ENCODE measurements at regions of chr5 and their contacts with region 1.

Region 1: DNA sequence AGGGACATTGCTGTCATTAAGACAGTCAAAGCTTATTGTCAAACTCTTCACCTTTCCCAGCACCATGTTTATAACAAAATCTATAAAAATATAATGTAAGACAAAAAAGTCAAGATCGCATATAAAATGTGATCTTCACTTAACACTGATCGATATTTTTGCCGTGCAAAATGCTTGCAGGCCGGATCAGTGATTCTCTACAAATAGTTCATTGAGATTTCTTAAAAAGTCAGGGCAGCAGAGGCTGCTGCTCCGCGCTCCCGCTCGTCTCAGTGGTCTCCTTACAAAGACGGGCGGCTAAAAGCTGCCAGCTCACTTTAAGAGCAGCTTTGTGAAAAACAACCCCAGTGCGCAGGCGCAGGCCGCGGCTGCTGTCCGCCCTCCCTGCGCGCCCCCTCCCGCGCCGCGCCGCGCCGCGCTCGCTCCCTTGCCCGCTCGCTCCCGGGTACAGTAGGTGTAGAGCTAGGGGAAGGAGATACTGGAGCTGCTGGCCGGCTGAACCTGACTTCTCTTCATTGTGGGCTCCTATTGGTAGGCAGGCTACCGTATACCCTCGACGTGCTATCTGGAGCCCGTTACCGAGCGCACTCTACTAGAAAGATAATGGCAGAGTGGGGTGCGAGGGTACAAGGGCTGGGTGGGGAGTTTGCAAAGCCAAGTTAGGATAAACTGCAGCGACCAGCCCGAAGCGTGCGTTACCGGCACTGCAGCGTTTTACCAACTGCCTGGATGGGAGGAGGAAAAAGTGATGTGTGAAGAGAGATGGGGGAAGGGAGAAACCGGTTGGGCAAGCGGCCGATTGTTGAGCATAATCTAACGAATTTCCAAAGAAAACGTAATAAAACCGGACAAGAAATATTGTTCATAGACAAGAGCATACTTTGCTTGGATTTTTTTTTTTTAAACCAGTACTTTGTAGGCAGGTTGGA is at the start of gene ARRDC3:
- DNase-seq: peak; percentile 96 to 98
- H3K4me3 ChIP-seq: peak within 1 kb of the TSS; percentile 58 to 62
- H3K27ac ChIP-seq: peak within 1 kb of the TSS; percentile 92 to 93
- H3K4me1 ChIP-seq: peaks cover 0 to 17% (median 9%) of the 10 kb centered on the region in 4 donors
- H3K27me3 ChIP-seq: no peaks in the 10 kb centered on the region
- CTCF ChIP-seq: peak in 1 of 2 experiments; percentile 13

Region 2: DNA sequence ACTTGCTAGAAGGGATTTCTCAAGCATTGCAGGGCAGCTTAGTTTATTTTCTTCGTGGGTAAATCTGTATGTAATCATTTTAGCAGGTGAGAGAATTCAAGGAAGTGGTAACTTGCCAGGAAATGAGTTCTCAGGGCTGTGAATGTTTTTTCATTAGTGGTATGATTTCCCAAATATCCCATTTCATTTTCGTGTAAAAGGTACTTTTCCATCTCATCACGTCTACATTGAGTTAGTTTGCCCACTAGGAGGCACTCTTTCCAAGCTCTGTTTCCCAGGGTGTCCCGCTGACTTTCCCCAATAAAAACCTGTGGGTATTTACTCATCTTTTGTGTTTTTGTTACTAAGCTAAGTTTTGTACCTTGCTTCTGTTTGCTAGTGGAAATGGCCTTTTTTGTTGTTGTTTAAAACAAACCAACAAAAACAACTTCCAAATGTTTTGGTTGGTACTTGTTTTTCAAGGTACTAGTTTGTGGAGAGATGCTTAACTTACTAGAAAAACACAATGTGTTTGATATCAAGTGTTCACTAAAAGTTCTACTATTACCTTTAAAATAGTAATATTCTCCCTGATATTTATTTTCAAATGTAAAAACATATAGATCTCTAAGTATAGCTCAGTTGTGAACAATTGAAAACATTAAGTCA is 451.1 kb before region 1 on chr5:
- intact Hi-C with region 1: loop called (anchors 5 kb)
- DNase-seq: peak in 1 of 2 donors; percentile 22
- H3K4me3 ChIP-seq: no peak overlapping the region
- H3K27ac ChIP-seq: no peak overlapping the region
- H3K4me1 ChIP-seq: peaks cover 0 to 9% (median 3%) of the 10 kb centered on the region in 4 donors
- H3K27me3 ChIP-seq: no peaks in the 10 kb centered on the region
- CTCF ChIP-seq: peak; percentile 73 to 76

Region 3: DNA sequence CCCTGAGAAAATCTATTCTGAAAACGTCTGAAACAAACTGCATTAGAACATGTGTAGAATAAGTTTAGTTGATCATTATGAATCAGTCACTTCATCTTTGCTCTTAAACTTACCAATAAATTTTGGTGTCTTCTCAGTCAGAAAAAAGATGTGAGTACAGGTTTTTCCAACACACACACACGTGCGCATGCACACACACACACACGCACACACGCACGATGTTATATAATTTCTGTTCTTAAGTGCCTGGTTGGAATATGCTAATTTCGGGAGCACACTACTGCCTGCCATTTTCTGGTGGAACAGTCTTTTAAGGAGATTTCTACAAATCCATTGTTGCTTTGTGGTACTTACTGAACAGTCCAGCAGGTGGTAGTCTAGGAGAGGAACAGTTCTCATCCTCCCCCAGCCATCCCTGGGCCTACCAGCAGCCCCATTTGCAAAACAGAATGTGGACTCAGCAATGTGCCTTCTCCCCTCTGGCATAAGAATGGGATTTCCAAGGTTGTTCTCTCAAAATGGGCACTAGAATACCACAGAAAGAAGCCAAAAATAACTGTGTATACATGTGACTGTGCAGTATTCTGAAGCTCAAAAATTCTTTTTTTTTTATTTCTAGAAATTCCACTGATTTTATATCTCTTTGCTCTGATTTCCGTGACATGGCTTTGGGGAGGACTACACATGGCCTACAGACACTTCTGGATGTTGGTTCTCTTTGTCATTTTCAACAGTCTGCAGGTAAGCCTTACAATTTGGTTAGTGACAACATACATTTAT is 281.5 kb before region 1 on chr5:
- intact Hi-C with region 1: loop called (anchors 2 kb)
- DNase-seq: peak; percentile 71 to 84
- H3K4me3 ChIP-seq: no peak overlapping the region
- H3K27ac ChIP-seq: peak overlapping the region; percentile 24 to 36
- H3K4me1 ChIP-seq: peaks cover 0 to 8% (median 0%) of the 10 kb centered on the region in 4 donors
- H3K27me3 ChIP-seq: no peaks in the 10 kb centered on the region
- CTCF ChIP-seq: peak; percentile 78 to 94

Region 4: DNA sequence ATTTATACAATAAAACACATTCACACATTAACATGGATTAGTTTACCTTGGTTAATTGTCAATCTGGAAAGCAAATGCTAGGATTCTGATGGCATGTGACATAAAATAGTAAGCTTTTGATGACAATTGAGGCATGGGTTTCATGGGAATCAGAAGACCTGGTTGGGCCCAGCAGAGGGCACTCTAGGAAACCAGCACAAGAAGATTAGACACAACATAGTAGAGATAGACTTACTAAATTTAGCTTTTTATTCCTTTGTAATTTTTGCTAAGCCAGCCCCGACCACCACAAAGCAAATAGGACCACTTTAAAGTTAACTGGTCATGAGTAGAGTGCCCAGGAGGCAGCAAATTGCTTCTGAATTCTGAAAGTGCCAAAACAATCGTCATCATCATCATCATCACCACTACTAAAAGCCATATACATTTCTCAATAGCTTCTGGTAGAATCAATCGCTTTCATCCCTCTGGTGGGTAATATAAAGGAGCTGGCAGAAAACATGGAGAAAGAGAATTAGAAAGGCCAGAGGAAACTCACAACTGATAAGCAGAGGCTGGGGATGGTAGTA is 163.4 kb before region 1 on chr5:
- intact Hi-C with region 1: loop called (anchors 10 kb)
- DNase-seq: no peak
- H3K4me3 ChIP-seq: no peak overlapping the region
- H3K27ac ChIP-seq: no peak overlapping the region
- H3K4me1 ChIP-seq: peaks cover 0 to 8% (median 0%) of the 10 kb centered on the region in 4 donors
- H3K27me3 ChIP-seq: no peaks in the 10 kb centered on the region
- CTCF ChIP-seq: no peak

Region 5: GRCh38 chr5:91280362-91281269 is 102.7 kb before region 1 on chr5:
- intact Hi-C with region 1: loop called (anchors 2 kb)
- DNase-seq: peak; percentile 88 to 97
- H3K4me3 ChIP-seq: peak overlapping the region; percentile 58 to 59
- H3K27ac ChIP-seq: peak overlapping the region; percentile 80 to 94
- H3K4me1 ChIP-seq: peaks cover 0 to 21% (median 3%) of the 10 kb centered on the region in 4 donors
- H3K27me3 ChIP-seq: no peaks in the 10 kb centered on the region
- CTCF ChIP-seq: no peak

Measured in tibial artery (tissue), 4 donors.